ENCODE measurements at regions of chr5 and their contacts with region 1.

Region 1: DNA sequence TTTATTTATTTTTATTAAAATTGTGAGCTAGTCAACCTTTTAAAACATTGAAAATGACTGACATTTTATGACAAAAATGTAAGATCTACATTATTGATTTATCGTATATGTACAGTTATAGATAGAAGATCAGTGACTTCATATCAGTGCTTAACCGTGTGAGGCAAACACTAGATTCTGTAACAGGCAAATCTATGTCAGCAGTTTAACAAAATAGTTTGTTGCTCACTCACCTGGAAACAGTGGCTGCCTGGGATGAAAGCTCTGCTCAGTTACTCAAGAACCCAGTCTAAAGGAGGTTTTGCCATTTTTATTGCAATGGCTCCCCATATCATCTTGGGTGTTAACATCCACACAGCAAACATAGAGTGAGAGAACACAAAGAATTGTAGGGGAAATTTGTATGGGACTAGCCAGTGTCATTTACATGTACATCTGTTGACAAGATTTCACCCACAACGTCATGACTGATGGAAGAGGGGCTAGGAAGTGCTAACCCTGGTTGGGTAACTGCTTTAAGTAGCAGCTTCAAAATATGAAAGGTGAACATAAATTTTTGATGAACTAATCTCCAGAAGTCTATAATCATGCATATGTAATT is 49.0 kb downstream of the SGCD start:
- DNase-seq: no peak

Region 2: GRCh38 chr5:154754460-154755360 is 1621.3 kb before region 1 on chr5:
- intact Hi-C with region 1: no loop called
- DNase-seq: peak; percentile 100

Region 3: GRCh38 chr5:155978850-155979249 is 397.1 kb before region 1 on chr5:
- intact Hi-C with region 1: no loop called
- DNase-seq: no peak

Region 4: DNA sequence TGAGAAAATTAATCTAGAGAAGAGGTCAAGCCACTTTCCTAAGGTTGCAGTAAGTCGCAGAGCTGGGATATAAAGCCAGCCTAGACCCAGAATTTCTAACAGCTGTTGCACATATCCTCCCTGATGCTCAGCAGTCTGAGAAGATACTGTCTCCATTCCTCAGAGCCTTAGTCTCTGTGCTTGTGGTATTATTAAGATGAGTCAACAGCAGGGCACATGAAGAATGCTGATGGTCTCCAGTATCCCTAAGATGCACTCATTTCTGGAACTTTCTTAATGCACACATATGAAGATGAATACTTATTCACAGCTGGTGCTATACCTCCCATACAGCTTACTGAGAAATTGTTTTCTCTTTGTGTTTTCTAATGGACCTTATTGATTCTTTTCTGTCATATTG is 16.5 kb before region 1 on chr5:
- intact Hi-C with region 1: loop called in 1 of 2 experiments (anchors 1 kb)
- DNase-seq: no peak

Region 5: DNA sequence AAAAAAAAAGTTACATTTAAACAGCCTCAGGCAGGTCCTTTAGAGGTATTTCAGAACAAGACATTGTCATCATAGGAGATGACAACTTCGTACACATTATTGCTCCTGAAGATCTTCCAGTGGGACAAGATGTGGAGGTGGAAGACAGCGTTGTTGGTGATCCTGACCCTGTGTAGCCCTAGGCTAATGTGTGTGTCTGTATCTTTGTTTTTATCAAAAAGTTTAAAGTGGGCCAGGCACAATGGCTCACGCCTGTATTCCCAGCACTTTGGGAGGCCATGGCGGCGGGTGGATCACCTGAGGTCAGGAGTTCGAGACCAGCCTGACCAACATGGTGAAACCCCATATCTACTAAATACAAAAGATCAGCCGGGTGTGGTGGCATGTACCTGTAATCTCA is 14.2 kb after region 1 on chr5:
- intact Hi-C with region 1: loop called in 1 of 2 experiments (anchors 1 kb)
- DNase-seq: no peak

Region 6: DNA sequence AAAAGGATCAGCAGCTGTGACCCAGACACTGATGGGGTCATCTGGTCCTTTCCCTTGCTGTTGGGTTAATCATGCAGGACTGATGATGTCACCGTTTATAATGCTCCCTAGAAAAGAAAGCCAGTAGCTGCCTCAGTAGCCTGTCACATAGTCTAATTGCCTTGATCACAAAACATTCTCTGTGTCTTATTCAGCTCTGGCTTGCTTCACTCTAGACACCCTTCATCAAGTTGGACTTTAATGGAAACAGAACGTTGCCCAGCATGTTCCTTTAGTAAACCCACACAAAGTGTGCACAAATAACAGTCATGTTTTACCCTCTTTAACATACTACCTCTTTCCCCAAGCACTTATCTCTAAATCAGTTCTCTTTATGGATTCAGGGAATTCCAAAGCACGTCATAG is 121.8 kb after region 1 on chr5:
- intact Hi-C with region 1: no loop called
- DNase-seq: no peak

Region 7: GRCh38 chr5:156883316-156883875 is 507.4 kb after region 1 on chr5:
- intact Hi-C with region 1: no loop called
- DNase-seq: no peak